ENCODE measurements at regions of chr11 and their contacts with region 1.

Region 1: DNA sequence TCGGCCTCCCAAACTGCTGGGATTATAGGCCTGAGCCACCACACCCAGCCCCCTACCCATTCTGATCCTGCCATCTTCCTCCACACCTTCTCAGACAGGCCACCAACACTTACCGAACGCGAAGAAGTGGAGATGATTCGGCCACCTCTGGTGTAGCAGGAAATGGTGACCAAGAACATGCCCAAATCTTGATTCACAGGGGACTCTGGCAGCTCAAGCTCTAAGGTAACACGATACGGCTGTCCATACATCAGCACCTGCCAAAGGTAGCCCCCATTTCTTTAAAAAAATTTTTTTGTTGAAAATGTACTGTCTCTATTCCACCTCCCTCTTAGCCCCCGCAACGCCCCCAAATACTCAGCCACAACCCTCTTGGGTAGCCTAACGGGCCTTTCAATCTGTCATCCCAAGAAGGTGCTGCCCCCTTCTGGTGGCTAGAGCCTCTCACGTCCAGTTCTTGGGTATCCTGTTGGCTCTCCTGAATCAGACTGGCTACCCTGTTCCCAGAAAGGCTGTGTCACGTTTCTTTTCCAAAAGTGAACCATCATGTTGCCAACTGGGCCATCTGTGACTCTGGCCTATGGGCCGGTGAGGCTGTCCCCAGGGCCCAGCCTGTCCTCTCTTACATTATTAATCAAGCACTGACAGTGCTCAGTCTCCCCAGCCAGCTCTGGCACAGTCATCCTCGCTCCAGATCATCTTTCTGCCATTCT is 5.3 kb upstream of the LRRN4CL start:
- DNase-seq: peak; percentile 86
- H3K4me3 Mint-ChIP-seq: no peak overlapping the region
- H3K27ac Mint-ChIP-seq: no peak overlapping the region
- H3K4me1 Mint-ChIP-seq: peaks cover 6% of the 10 kb centered on the region
- H3K27me3 Mint-ChIP-seq: no peaks in the 10 kb centered on the region
- CTCF ChIP-seq: peak; percentile 80

Region 2: DNA sequence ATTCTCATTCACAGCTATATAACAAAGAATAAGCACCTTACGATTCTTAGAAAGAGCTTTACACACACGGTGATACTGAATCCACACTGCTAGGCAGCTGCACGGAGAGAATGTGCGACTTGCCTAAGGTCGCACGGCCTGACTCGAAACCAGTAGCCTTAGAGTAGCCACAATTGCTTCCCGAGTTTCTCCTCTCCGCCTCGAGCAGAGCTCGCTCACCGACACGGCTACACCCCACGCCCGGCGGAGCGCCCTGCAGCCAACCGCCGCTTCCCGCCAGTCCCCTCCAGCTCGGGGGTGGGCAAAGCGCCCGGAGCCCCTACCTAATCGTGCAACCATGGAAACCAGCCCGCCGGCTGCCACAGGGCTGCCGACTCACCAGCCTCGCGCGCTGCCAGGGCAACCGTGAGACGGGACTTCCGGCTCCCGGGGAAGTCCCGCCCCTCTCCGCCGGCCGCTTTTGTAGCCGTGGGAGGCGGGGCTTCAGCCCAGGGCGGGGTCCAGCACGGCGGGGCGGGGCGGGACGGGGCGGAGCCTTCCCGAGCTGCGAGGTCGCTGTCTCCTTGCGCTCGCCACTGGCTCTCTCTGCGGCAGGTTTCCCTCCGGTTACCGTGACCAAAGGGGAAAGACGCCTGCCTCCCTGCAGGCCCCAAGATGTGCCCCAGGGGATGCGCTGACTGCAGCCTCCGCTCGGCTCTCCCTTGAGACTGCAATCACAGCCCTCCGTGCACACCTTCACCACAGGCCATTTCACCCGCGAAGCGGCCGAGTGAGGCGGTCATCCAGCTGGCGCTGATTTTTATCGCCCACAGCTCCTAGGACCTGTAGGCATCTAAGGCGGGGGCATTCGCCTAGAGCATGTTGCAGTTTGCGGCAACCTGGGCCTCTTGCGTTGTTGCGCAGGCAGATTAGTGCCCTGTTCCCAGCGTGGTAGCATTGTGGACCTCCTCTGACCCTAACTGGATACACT is 11.6 kb after region 1 on chr11:
- CTCF ChIA-PET with region 1: interaction called, 38 read pairs
- POLR2A ChIA-PET with region 1: interaction called, 8 read pairs
- intact Hi-C with region 1: no loop called
- DNase-seq: peak; percentile 91
- H3K4me3 Mint-ChIP-seq: peak overlapping the region; percentile 92
- H3K27ac Mint-ChIP-seq: peak overlapping the region; percentile 94
- H3K4me1 Mint-ChIP-seq: peaks cover 25% of the 10 kb centered on the region
- H3K27me3 Mint-ChIP-seq: no peaks in the 10 kb centered on the region
- CTCF ChIP-seq: no peak

Region 3: GRCh38 chr11:64021757-64022093 is 1327.1 kb after region 1 on chr11:
- CTCF ChIA-PET with region 1: no interaction called
- POLR2A ChIA-PET with region 1: no interaction called
- intact Hi-C with region 1: no loop called
- DNase-seq: no peak
- H3K4me3 Mint-ChIP-seq: no peak overlapping the region
- H3K27ac Mint-ChIP-seq: no peak overlapping the region
- H3K4me1 Mint-ChIP-seq: no peaks in the 10 kb centered on the region
- H3K27me3 Mint-ChIP-seq: peaks cover 5% of the 10 kb centered on the region
- CTCF ChIP-seq: no peak